T-cell (primary cell): ENCODE measurements at regions of chr10 and their contacts with region 1.

Region 1: DNA sequence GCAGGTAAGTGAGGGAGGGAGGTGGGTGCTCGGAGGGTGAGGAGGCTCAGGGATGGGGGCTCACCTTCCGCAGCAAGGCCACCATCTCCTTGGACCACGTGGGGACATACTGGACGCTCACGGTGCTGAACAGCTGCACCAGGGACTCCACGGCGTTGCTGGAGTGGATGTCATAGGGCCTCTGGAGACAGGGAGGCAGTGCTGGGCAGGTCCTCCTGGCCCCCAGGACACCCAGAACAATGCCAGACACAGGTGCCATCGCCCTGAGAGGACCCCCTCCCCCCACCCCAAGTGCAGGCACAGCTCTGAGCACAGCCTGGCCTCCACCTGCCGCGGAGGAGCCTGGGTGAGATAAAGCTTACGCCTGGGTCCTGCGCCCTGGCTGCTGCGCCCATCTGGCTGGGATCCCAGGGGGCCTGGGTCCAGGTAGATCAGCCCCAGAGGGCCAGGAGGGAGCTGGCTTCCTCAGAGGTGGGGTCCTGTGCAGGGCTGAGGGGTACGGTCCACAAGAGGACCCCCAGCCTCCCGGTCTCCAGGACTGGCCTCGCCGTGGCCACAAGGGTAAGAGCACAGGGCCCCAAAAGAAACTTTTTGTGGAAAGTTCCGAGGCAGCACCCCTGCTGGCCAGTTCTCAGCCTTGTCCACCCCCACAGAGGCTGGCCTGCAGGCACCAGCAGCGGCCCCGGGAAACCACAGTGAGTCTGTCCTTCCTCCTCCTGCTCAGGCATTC is 37.8 kb downstream of the DPYSL4 start:
- DNase-seq: no peak
- ATAC-seq: no peak
- H3K4me3 ChIP-seq: no peak overlapping the region
- H3K4me3 Mint-ChIP-seq: no peak overlapping the region
- H3K27ac ChIP-seq: no peak overlapping the region
- H3K27ac Mint-ChIP-seq: no peak overlapping the region
- H3K4me1 ChIP-seq: peaks cover 0 to 10% of the 10 kb centered on the region in 2 experiments
- H3K4me1 Mint-ChIP-seq: peaks cover 2 to 7% (median 5%) of the 10 kb centered on the region in 3 donors
- H3K27me3 ChIP-seq: no peaks in the 10 kb centered on the region
- H3K27me3 Mint-ChIP-seq: no peaks in the 10 kb centered on the region

Region 2: GRCh38 chr10:132289439-132289838 is 64.9 kb after region 1 on chr10:
- CTCF ChIA-PET with region 1: interaction called in 1 of 2 experiments, 10 read pairs
- POLR2A ChIA-PET with region 1: no interaction called
- DNase-seq: no peak
- ATAC-seq: no peak
- H3K4me3 ChIP-seq: no peak overlapping the region
- H3K4me3 Mint-ChIP-seq: no peak overlapping the region
- H3K27ac ChIP-seq: no peak overlapping the region
- H3K27ac Mint-ChIP-seq: no peak overlapping the region
- H3K4me1 ChIP-seq: no peaks in the 10 kb centered on the region
- H3K4me1 Mint-ChIP-seq: no peaks in the 10 kb centered on the region
- H3K27me3 ChIP-seq: peaks cover 0 to 9% of the 10 kb centered on the region in 2 experiments
- H3K27me3 Mint-ChIP-seq: no peaks in the 10 kb centered on the region